Left ventricle myocardium superior (tissue), 1 donor: ENCODE measurements at regions of chr16 and their contacts with region 1.

Region 1: GRCh38 chr16:24568392-24568791 is 29.0 kb downstream of the RBBP6 start:
- DNase-seq: no peak
- ATAC-seq: no peak

Region 2: GRCh38 chr16:24807301-24807700 is 238.9 kb after region 1 on chr16:
- intact Hi-C with region 1: loop called (anchors 5 kb)
- DNase-seq: no peak
- ATAC-seq: no peak